ENCODE measurements at regions of chr2 and their contacts with region 1.

Region 1: DNA sequence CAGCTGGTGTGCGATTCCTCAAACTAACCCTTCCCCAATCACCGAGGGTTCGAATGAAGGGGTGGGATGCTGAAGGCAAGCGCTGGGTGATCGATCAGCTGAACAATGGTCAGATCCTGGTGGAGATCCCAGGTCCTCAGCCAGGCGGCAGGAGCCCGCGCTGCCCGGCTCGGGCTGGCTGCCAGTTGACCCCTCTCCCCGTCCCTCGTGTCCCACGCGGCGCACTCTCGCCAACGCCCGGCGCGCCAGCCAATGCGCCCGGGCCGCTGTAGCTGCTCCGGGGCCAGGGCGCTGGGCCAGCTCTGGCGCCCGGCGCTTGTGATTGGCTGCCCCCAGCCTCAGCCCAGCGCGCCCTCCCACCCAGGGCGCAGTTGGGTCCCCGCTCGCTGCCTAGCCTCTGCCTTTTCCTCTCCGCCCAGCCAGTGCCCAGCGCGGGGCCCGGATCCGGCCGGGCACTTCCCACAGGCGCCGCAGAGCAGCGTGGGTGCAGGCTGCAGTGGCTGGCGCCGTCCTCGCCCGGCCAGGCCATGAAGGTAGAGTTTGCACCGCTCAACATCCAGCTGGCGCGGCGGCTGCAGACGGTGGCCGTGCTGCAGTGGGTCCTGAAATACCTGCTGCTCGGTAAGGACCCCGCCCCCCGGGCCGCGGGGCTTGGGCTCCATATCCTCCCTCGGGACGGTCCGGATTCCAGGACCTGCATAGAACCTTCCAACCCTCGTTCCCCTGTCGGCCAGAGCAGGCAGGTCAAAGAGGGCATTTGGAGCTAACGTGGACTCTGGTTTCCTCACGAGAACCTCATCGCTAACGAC is at the start of gene MOGAT1:
- DNase-seq: peak; percentile 26
- CTCF ChIP-seq: no peak

Region 2: DNA sequence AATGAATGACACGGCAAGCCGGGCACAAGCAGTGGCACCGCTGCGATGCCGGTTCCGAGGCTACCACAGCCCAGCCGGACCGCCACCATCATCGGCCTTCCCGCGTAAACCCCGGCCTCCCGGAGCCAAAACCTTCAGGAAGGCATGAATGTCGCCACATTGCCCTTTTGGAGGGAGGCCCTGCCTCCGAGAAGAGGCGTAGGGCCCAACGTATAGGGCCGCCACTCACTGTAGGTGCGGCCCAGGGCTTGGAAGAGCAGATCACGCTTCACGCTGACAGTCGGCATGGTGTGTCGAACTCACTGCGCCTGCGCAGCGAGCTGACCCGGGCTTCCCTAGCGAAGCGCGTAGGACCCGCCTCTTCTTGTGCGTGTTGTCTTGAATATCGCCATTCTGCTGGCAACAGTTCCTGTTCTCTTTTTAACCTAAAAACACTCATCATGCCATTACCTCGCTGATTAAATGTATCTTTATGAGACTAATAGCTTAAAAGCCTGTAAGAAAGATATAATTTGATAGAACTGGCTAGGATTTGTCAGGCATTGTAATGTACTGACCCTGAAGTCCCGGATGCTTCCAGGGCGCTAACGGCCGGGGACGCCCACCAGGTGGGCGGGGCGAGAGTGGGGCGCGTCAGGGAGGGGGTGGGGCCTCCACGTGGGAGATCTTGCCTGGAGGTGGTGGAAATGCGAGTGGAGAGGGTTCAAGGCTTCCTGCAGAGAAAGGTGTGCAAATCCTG is 15.5 kb before region 1 on chr2 and contains the start of gene FARSB:
- CTCF ChIA-PET with region 1: interaction called, 12 read pairs
- POLR2A ChIA-PET with region 1: no interaction called
- DNase-seq: peak; percentile 95
- CTCF ChIP-seq: no peak

Measured in GM10248 (cell line).